Heart left ventricle (tissue), 16 donors: ENCODE measurements at regions of chr15 and their contacts with region 1.

Region 1: DNA sequence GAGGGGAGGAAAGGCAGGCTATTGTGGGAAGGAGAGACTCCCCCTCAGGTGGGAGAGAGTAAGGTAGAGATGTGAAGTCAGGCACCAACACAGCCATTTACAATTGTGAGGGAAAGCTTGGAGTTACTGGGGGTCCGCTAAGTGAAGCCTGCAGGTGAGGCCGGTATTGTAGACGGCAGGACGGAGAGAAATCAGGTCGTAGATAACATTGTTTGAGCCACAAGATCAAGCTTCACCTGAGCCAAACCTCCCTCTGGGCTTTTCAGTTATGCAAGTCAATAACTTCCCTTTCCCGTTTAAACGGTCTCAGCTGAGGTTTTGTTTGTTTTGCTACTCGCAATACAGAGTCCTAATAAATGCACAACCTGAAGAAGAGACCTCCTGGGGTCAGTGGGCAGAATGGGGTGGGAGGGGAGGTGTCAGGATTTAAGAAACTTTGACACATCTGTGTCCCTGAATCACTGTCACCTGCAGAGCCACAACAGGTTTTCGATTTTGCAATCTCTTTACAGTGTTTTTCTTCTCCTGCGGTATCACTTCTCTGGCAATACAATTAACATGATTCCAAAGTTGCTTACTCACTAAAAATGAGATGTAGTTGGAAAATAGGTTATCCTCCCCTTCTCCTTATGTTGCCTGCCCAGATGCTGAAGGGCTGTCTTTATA is 72.0 kb upstream of the GLCE start:
- DNase-seq: no peak
- ATAC-seq: no peak
- H3K4me3 ChIP-seq: no peak overlapping the region
- H3K27ac ChIP-seq: no peak overlapping the region
- H3K4me1 ChIP-seq: peaks cover 0 to 22% (median 10%) of the 10 kb centered on the region in 12 donors
- H3K27me3 ChIP-seq: peaks cover 0 to 2% (median 0%) of the 10 kb centered on the region in 9 donors
- CTCF ChIP-seq: no peak
- POLR2A ChIP-seq: no peak

Region 2: GRCh38 chr15:69031013-69032001 is 57.1 kb before region 1 on chr15:
- intact Hi-C with region 1: no loop called
- DNase-seq: peak; percentile 18 to 79 (median 44)
- ATAC-seq: peak; percentile 79 to 86 (median 84)
- H3K4me3 ChIP-seq: peak overlapping the region in 10 of 12 donors; percentile 8 to 45 (median 33)
- H3K27ac ChIP-seq: no peak overlapping the region
- H3K4me1 ChIP-seq: peaks cover 0 to 9% (median 0%) of the 10 kb centered on the region in 12 donors
- H3K27me3 ChIP-seq: peaks cover 0 to 38% (median 0%) of the 10 kb centered on the region in 9 donors
- CTCF ChIP-seq: peak; percentile 30 to 66 (median 50)
- POLR2A ChIP-seq: no peak

Region 3: DNA sequence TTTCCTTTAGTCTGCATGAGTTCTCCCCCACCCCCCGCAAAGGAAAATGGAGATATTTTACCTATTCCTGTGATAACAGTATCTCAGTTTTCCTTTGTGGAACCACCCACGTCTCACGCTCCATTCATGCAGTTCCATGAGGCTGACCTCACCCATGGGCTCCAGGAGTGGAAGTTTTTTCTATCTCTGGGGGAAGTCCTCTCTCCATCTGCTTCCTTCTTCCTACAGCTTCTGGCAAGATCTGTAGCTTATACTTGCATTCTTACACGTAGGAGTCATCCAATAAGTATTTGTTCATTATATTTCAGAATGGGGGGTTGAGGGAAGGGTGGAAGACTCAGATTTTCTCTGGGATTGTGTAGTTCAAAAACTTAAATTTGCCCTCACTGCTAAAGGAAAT is 66.3 kb after region 1 on chr15:
- intact Hi-C with region 1: loop called in 1 of 10 experiments (anchors 5 kb)
- DNase-seq: peak in 1 of 5 donors; percentile 37
- ATAC-seq: peak in 3 of 4 donors; percentile 33 to 90 (median 78)
- H3K4me3 ChIP-seq: no peak overlapping the region
- H3K27ac ChIP-seq: no peak overlapping the region
- H3K4me1 ChIP-seq: peaks cover 0 to 14% (median under 1%) of the 10 kb centered on the region in 12 donors
- H3K27me3 ChIP-seq: no peaks in the 10 kb centered on the region
- CTCF ChIP-seq: no peak
- POLR2A ChIP-seq: no peak